ENCODE measurements at regions of chr14 and their contacts with region 1.

Region 1: DNA sequence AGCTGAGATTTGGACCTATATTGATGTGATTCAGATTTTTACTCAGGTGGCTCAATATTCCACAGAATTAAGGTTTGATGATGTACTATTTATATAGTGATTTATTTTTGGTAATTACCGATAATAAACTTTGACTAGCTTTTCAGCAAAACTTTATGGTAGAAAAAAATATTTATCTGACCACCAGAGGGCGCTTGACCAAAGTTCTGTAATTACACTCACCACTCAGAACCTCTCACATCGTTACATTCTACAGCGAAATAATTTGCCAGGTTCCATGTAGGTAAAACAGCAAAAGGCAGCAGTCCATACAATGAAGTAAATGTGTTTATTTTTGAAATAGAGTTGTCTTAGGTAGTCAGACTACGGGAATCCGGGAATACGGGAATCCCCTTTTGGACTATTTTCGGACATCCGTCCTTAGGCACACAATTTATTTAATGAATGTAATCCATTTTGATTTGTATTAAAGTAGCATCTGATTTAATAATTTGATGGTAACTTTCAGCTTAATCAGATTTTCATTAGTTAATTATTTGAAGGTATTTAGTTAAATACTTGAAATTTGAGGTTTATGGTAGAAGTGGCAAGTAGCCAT is 143.0 kb upstream of the DDHD1 start:
- DNase-seq: peak in 1 of 2 donors; percentile 59
- H3K4me3 ChIP-seq: no peak overlapping the region
- H3K27ac ChIP-seq: no peak overlapping the region
- H3K4me1 ChIP-seq: peaks cover 0 to 6% (median 0%) of the 10 kb centered on the region in 4 donors
- H3K27me3 ChIP-seq: no peaks in the 10 kb centered on the region
- CTCF ChIP-seq: peak in 4 of 7 experiments; percentile 27 to 86 (median 56)
- EP300 ChIP-seq: no peak
- POLR2A ChIP-seq: no peak

Region 2: GRCh38 chr14:53368711-53369191 is 72.7 kb after region 1 on chr14:
- intact Hi-C with region 1: no loop called
- DNase-seq: peak in 1 of 2 donors; percentile 21
- H3K4me3 ChIP-seq: no peak overlapping the region
- H3K27ac ChIP-seq: peak overlapping the region in 4 of 5 donors; percentile 0 to 66 (median 26)
- H3K4me1 ChIP-seq: peaks cover 0 to 17% (median 8%) of the 10 kb centered on the region in 4 donors
- H3K27me3 ChIP-seq: no peaks in the 10 kb centered on the region
- CTCF ChIP-seq: no peak
- EP300 ChIP-seq: no peak
- POLR2A ChIP-seq: no peak

Region 3: GRCh38 chr14:54347997-54348611 is 1052.0 kb after region 1 on chr14:
- intact Hi-C with region 1: loop called (anchors 10 kb)
- DNase-seq: peak in 1 of 2 donors; percentile 80
- H3K4me3 ChIP-seq: no peak overlapping the region
- H3K27ac ChIP-seq: peak overlapping the region in 2 of 5 donors; percentile 67 to 78
- H3K4me1 ChIP-seq: peaks cover 0 to 21% (median 11%) of the 10 kb centered on the region in 4 donors
- H3K27me3 ChIP-seq: no peaks in the 10 kb centered on the region
- CTCF ChIP-seq: peak in 5 of 7 experiments; percentile 52 to 81 (median 67)
- EP300 ChIP-seq: no peak
- POLR2A ChIP-seq: no peak